Right cardiac atrium (tissue), 5 donors: ENCODE measurements at regions of chr10 and their contacts with region 1.

Region 1: GRCh38 chr10:79374312-79375191 is 27.3 kb downstream of the PPIF start:
- DNase-seq: peak; percentile 80 to 92 (median 92)
- ATAC-seq: peak; percentile 57 to 69
- H3K4me3 ChIP-seq: no peak overlapping the region
- H3K27ac ChIP-seq: no peak overlapping the region
- H3K4me1 ChIP-seq: peaks cover 4% of the 10 kb centered on the region
- H3K27me3 ChIP-seq: no peaks in the 10 kb centered on the region

Region 2: DNA sequence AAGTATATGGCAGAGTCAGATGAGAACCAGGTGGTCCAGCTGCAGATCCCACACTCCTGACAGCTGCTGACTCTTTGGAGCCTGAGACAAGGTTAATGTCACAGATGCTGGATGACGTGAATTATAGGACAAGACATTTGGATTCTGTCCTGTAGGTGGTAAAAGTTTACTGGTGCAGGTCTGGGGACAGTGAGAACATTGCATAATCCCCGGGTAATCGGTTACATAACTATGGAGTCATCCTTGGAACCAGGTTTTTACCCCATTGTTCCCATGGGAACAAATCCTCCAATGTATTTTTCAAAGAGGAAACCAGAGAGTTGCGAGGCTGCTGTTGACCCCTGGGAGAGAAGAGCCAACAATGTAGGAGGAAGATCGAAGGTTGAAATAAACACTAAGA is 98.4 kb after region 1 on chr10:
- intact Hi-C with region 1: loop called (anchors 5 kb)
- DNase-seq: no peak
- ATAC-seq: no peak
- H3K4me3 ChIP-seq: no peak overlapping the region
- H3K27ac ChIP-seq: no peak overlapping the region
- H3K4me1 ChIP-seq: no peaks in the 10 kb centered on the region
- H3K27me3 ChIP-seq: no peaks in the 10 kb centered on the region

Region 3: DNA sequence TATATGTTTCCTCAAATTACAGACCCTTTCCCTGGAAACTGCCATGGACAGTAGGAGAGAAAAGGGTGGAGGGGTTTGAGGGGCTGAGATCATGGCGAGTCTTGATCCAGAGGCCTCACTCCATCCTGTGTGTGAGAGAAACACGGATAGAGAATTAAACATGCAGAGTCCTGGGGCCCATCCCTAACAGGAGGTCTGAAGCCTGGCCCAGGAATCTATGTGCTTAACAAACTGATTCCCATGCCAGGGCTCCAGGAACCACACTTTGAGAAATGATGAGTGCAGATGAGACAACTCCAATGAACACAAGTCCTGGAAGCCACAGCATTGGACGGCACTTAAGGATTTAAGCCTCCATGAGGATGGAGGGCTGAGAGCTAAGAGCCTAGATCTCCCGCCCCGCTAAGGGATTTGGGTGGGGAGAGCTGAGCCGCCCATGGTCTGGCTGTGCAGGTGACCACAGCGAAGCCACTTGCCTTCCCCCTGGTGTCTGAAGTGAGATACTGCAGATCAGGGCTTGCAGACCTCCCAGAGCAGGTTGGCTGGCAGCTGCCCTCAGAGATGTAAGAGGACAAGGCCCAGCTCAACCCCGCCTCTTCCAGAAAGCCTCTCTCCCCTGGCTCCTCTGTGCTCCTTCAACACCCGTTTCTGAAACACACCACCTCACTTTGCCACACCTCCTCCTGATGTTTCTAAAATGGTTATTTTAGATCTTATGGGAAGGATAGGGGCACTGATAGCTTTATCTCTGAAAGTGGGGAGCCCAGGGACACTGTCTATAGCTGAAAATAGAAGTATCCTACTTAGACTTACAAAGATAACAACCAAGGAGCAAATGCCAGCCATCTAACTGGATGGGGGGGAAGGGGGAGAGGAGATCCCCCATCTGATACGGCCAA is 113.0 kb after region 1 on chr10:
- intact Hi-C with region 1: loop called in 3 of 4 experiments (anchors 2 to 5 kb)
- DNase-seq: peak; percentile 60 to 80 (median 74)
- ATAC-seq: peak; percentile 50 to 78
- H3K4me3 ChIP-seq: no peak overlapping the region
- H3K27ac ChIP-seq: peak overlapping the region; percentile 49
- H3K4me1 ChIP-seq: peaks cover 6% of the 10 kb centered on the region
- H3K27me3 ChIP-seq: no peaks in the 10 kb centered on the region